Activated T-helper 2 cell treated with anti-CD3 and anti-CD28 coated beads, Interferon-gamma antibody, Interleukin-2, Interleukin-4, amounts not matched to agents 10 μg/mL and 5 μg/mL and 100 μg/mL, durations not matched to agents 14 hours and 24 hours and 36 hours (primary cell): ENCODE measurements at regions of chr3 and their contacts with region 1.

Region 1: GRCh38 chr3:43286115-43286840 is at the start of gene SNRK:
- DNase-seq: peak; percentile 88
- H3K4me3 Mint-ChIP-seq: peak within 1 kb of the TSS; percentile 89
- H3K27ac Mint-ChIP-seq: peak within 1 kb of the TSS; percentile 82
- H3K4me1 Mint-ChIP-seq: peaks cover 33% of the 10 kb centered on the region
- H3K27me3 Mint-ChIP-seq: peaks cover 10% of the 10 kb centered on the region
- total RNA-seq, gene SNRK: 28.0 and 28.7 TPM in 2 replicates

Region 2: DNA sequence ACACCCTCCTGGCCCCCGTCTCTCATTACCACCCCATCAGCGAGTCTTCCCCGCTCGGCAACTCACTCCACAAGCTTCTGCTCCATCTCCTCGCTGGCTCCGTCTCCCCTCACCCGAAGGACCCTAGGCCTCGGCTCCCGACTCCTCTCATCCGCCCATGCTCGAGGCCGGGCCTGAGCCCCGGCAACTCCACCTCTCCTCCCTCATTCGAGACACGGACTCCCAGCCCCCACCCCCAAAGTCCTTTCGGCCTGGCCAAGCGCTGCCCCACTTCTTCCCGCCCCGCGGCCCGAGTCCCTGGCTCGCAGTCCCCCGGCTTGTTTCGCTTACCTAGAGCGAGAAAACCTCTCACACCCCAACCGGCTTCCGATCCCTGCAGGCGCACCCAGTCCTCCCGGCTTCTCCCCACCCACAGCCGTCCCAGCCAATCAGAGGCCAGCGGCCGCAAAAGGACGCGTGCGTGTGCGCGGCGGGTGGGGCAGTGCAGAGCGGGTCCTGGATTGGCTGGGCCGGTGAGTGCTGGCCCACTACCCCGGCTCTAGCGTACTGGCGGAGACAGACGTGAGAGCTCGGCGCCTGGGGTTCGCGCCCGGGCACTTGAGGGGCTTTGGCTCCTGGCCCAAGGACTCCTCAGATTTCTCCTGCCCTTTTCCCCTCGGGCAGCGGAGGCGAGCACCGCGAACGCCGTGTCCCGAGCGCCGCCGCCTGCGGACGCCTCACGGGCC is 482.0 kb before region 1 on chr3 and contains the start of gene HIGD1A:
- intact Hi-C with region 1: loop called (anchors 5 kb)
- DNase-seq: peak; percentile 92
- H3K4me3 Mint-ChIP-seq: peak within 1 kb of the TSS; percentile 96
- H3K27ac Mint-ChIP-seq: peak within 1 kb of the TSS; percentile 87
- H3K4me1 Mint-ChIP-seq: peaks cover 36% of the 10 kb centered on the region
- H3K27me3 Mint-ChIP-seq: peaks cover 31% of the 10 kb centered on the region
- total RNA-seq, gene HIGD1A: 85.9 and 88.5 TPM in 2 replicates

Region 3: DNA sequence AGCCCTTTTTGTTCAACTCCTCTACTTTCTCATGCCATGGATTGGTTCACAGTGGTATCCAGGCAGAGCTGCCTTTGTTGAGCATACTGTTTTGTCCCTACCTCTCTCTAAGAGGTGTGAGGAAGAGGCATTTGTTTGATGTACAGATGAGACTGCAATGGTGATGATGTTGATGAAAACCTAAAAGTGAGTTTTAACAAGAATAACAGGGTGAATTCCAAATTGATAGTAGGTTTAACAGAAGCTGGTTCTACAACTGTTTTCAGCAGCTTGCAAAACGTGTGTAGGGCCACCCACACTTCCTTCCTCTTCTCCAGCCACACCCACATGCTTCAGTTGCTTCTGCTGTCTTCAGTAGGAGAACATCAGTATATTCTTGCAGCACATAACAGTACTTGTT is 10.3 kb after region 1 on chr3:
- intact Hi-C with region 1: loop called (anchors 1 kb)
- DNase-seq: peak; percentile 56
- H3K4me3 Mint-ChIP-seq: peak overlapping the region; percentile 70
- H3K27ac Mint-ChIP-seq: peak overlapping the region; percentile 78
- H3K4me1 Mint-ChIP-seq: peaks cover 66% of the 10 kb centered on the region
- H3K27me3 Mint-ChIP-seq: no peaks in the 10 kb centered on the region

Region 4: DNA sequence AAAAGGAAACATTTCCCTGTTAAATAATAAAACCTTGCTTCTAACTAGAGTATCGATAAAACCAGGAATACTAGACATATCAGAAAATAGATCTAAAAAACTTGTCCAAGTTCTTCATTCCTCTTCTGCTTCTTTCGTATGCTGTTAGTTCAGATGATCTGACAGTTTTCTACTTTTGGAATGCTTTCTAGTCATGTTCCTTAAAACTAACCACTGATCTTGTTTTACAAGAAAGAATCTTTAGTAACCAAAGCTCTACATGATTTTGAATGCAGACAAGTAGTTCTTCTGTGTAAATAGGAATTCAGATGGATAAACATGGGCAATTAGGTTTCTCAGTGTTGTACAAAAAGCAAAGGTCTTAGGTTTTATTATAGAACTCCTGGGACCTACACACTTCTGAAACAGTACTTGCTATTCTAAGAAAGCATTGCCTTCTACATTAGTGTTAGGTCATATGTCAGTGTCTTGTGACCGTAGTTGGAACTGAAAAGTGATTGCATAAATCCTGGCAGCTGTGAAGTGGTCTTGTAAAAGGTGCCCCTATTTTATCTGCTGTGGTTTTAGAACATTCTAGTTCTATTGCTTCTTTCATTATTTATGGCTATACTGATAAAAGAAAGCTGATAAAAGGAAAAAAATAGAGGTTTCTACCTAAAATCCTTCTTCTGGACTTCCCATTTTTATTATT is 40.8 kb after region 1 on chr3:
- intact Hi-C with region 1: loop called (anchors 5 kb)
- DNase-seq: no peak
- H3K4me3 Mint-ChIP-seq: no peak overlapping the region
- H3K27ac Mint-ChIP-seq: peak overlapping the region; percentile 56
- H3K4me1 Mint-ChIP-seq: peaks cover 36% of the 10 kb centered on the region
- H3K27me3 Mint-ChIP-seq: no peaks in the 10 kb centered on the region

Region 5: GRCh38 chr3:43378066-43378935 is 92.0 kb after region 1 on chr3:
- intact Hi-C with region 1: loop called (anchors 1 kb)
- DNase-seq: peak; percentile 52
- H3K4me3 Mint-ChIP-seq: no peak overlapping the region
- H3K27ac Mint-ChIP-seq: no peak overlapping the region
- H3K4me1 Mint-ChIP-seq: peaks cover 7% of the 10 kb centered on the region
- H3K27me3 Mint-ChIP-seq: peaks cover 14% of the 10 kb centered on the region

Region 6: DNA sequence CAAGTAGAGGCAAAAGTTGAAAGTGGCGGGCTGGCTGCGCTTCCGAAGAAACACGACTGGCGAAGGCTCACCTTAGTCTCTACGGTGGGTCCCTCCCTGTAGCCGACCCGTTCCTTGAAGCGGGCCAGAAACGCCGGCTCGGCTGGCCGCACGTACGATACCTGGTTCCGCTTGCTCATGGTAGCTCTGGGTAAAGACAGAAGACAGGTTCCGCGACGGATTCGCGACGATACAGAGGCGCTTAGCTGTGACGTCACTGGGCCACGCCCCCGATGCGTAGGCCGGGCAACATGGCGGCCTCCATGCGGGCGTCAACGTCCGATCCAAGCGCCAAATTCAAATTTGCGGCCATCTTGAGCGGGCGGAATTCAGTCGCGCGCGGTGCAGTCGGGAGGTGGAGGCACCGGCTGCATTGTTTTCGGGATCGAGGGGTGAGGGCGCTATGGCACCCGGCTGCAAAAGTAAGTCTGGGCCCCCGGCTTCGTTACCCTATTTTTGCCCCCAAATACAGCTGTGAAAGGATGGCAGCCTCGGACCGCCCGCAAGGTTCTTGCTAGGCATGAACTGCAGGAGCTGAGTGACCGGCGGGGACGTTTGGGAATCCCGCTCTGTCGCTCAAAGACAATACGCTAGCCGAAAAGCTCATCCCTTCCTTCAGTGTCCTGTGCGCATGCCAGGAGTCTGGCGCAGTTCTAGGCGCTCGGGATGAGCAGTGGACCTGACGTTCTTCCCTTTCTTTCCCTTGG is 1475.3 kb after region 1 on chr3 and contains the starts of genes KIAA1143 and KIF15:
- intact Hi-C with region 1: loop called (anchors 5 kb)
- DNase-seq: peak; percentile 94
- H3K4me3 Mint-ChIP-seq: peak within 1 kb of the TSS; percentile 96
- H3K27ac Mint-ChIP-seq: peak within 1 kb of the TSS; percentile 90
- H3K4me1 Mint-ChIP-seq: peaks cover 22% of the 10 kb centered on the region
- H3K27me3 Mint-ChIP-seq: no peaks in the 10 kb centered on the region
- total RNA-seq, gene KIAA1143: 39.2 and 43.7 TPM in 2 replicates
- total RNA-seq, gene KIF15: 28.5 and 28.7 TPM in 2 replicates